Heart right ventricle (tissue), 16 donors: ENCODE measurements at regions of chr9 and their contacts with region 1.

Region 1: DNA sequence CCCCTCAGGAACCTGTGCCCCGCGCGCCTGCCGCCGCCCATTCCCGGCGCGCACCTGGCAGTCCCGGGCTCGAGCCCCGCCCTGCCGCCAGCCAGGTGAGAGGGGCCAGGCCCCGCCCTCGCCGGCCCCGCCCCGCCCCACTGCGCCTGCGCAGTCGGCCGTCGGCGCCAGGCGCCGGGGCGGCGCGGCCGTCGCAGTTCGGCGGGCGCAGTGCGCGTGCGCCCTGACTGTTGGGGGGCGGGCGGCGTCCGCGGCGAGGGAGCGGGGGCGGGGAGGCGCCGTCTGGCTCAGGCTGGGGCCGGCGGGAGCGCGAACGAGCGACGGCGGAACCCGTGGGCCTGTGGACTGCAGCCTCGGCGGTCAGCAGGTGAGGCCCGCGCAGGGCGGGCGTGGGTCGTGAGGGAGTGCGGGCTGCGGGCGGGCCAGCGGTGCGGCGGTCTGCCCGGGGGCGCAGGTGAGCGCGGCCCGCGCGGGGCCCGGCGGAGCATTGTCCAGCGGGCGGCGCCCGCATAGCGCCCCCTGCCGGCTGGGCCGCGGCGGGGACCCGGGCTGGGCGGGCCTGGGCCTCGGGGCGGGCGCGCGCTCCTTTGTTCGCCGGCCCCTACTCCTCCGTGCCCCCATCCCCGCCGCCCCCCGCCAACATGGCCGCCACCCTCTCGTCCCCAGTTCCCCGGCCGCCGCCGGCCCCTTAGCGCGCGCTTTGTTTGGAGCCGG is at the start of gene SPIN1:
- DNase-seq: peak; percentile 79 to 87
- ATAC-seq: peak; percentile 73 to 93 (median 88)
- H3K4me3 ChIP-seq: peak within 1 kb of the TSS; percentile 63 to 97 (median 90)
- H3K27ac ChIP-seq: peak within 1 kb of the TSS; percentile 85 to 95 (median 92)
- H3K4me1 ChIP-seq: peaks cover 2 to 48% (median 17%) of the 10 kb centered on the region in 9 donors
- H3K27me3 ChIP-seq: no peaks in the 10 kb centered on the region
- CTCF ChIP-seq: peak in 5 of 9 donors; percentile 28 to 81 (median 67)
- total RNA-seq, gene SPIN1: 40.6 to 65.0 (median 51.7) TPM

Region 2: GRCh38 chr9:88106491-88106890 is 281.8 kb before region 1 on chr9:
- intact Hi-C with region 1: loop called in 1 of 10 experiments (anchors 10 kb)
- DNase-seq: peak in 1 of 2 donors; percentile 13
- ATAC-seq: peak in 1 of 8 donors; percentile 35
- H3K4me3 ChIP-seq: no peak overlapping the region
- H3K27ac ChIP-seq: no peak overlapping the region
- H3K4me1 ChIP-seq: no peaks in the 10 kb centered on the region
- H3K27me3 ChIP-seq: peaks cover 0 to 26% (median 6%) of the 10 kb centered on the region in 7 donors
- CTCF ChIP-seq: peak in 7 of 9 donors; percentile 43 to 62 (median 46)

Region 3: DNA sequence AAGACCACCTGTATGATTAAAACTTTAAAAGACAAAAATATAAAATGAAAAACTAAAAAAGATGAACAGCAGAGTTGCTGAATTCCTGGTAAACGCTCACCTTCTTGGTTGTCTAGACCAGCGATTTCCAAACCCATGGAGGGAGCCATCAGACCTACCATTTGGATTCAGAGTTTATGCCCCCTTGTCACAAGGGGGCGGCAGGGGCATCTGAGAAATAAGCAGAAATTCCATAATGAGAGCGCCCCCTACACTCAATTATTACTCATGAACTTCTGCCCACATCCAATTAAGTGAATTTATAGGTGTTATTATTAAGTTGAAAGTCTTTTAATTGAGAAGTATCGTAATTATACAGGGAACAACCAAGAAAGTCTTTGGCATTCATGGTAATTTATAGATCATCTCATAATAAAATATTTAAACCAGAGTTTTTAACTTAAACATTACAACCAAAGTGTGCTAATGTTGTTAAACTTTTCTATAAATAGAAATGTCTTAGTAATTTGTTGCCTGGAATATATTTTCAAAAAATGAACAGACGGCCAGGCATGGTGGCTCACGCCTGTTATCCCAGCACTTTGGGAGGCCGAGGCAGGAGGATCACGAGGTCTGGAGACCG is 214.8 kb before region 1 on chr9:
- intact Hi-C with region 1: loop called in 5 of 10 experiments (anchors 2 to 10 kb)
- DNase-seq: peak; percentile 27 to 46
- ATAC-seq: peak in 5 of 8 donors; percentile 28 to 77 (median 45)
- H3K4me3 ChIP-seq: no peak overlapping the region
- H3K27ac ChIP-seq: no peak overlapping the region
- H3K4me1 ChIP-seq: no peaks in the 10 kb centered on the region
- H3K27me3 ChIP-seq: no peaks in the 10 kb centered on the region
- CTCF ChIP-seq: peak in 8 of 9 donors; percentile 49 to 88 (median 70)

Region 4: GRCh38 chr9:88197781-88198340 is 190.5 kb before region 1 on chr9:
- intact Hi-C with region 1: loop called in 1 of 10 experiments (anchors 10 kb)
- DNase-seq: no peak
- ATAC-seq: no peak
- H3K4me3 ChIP-seq: peak overlapping the region in 2 of 10 donors; percentile 23 to 34
- H3K27ac ChIP-seq: peak overlapping the region in 1 of 10 donors; percentile 57
- H3K4me1 ChIP-seq: peaks cover 0 to 19% (median 6%) of the 10 kb centered on the region in 9 donors
- H3K27me3 ChIP-seq: no peaks in the 10 kb centered on the region
- CTCF ChIP-seq: no peak

Region 5: DNA sequence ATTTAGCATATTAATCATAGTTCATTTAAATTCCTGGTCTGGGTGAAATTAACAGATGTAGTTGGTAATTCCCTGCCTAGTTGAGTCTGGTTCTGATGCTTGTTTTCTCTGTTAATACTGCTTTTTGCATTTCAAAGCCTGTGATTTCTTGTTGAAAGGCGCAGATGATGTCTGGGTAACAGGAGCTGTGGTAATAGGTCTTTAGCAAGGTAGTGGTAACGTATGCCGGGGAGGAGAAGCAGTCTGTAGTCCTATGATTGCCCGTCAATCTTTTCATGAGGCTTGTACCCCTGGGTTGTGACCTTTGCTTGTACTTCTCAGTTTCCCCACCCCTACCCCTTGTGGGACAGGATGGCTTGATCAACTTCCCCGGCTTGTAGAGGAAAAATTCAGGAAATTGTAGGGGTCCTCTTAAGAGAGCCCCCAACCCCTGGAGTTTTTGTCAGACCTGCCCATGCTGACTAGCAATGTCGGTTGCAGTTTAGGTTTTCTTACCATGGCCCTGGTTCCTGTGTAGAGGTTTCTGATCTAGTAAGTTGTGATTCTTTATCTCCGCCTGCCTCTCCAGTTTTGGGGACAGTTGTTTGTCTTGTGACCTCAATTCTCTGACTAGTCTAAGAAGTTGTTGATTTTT is 55.3 kb after region 1 on chr9:
- intact Hi-C with region 1: loop called in 1 of 10 experiments (anchors 10 kb)
- DNase-seq: no peak
- ATAC-seq: no peak
- H3K4me3 ChIP-seq: no peak overlapping the region
- H3K27ac ChIP-seq: no peak overlapping the region
- H3K4me1 ChIP-seq: peaks cover 0 to 24% (median 11%) of the 10 kb centered on the region in 9 donors
- H3K27me3 ChIP-seq: no peaks in the 10 kb centered on the region
- CTCF ChIP-seq: no peak

Region 6: DNA sequence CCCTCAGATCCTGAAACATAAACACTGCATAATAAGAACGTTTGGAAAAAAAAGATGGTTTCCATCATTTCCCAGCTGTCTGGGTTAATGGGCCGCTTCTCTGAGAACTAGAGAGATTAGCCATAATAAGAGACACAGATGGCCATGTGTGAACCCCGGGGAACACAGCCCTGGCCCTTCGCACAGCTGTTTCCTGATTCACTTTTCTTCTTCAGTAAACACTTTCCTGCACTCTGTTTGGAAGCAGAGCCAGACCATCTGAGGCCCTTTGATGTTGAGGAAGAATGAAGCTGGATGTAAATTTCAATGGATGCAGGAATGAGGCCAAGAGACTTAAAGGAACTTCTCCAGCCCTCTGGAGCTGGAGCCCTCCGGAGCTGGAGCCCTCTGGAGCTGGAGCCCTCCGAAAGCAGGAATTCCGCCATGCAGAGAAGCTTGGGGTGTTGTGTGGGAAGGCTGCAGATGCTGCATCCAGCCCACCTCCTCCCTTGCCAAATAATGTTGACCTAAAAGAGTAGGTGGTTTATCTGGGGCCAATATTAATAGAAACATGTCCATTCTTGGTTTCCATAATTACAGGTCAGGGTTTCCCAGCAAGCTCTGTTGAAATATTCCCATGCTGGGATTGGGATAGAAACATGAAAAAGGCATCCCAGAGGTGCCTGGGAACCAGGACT is 365.5 kb after region 1 on chr9:
- intact Hi-C with region 1: no loop called
- DNase-seq: peak in 1 of 2 donors; percentile 71
- ATAC-seq: peak; percentile 56 to 91 (median 78)
- H3K4me3 ChIP-seq: no peak overlapping the region
- H3K27ac ChIP-seq: peak overlapping the region in 9 of 10 donors; percentile 10 to 69 (median 53)
- H3K4me1 ChIP-seq: peaks cover 0 to 31% (median 18%) of the 10 kb centered on the region in 9 donors
- H3K27me3 ChIP-seq: no peaks in the 10 kb centered on the region
- CTCF ChIP-seq: no peak